ENCODE measurements at regions of chr2 and their contacts with region 1.

Region 1: GRCh38 chr2:163345908-163346573 is 389.8 kb downstream of the FIGN start:
- DNase-seq: no peak

Region 2: GRCh38 chr2:163119966-163120365 is 226.1 kb before region 1 on chr2:
- intact Hi-C with region 1: no loop called
- DNase-seq: no peak

Region 3: GRCh38 chr2:163142628-163143027 is 203.4 kb before region 1 on chr2:
- intact Hi-C with region 1: no loop called
- DNase-seq: no peak

Region 4: DNA sequence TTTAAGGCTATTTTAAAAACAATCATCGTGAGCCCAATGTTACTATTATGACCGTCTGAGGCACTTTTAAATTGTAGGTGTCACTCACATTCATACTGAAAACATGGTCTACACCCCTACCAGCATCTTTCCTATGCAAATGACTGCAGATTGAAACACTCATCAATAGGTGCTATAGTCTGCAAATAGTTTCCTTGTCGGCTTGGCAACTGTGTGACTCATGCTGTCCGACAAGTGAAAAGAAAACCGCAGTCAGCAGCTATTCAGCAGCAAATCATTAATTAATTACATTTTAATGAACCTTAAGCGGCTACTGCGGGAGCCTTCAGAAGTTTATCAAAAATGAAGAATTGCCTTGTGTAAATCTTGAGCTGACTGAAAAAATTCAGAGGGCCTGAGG is 255.3 kb after region 1 on chr2:
- intact Hi-C with region 1: loop called (anchors 10 kb)
- DNase-seq: no peak

Region 5: GRCh38 chr2:163735685-163736432 is 389.8 kb after region 1 on chr2 and contains the start of gene FIGN:
- intact Hi-C with region 1: loop called (anchors 2 kb)
- DNase-seq: peak; percentile 86
- total RNA-seq, gene FIGN: 16.4 TPM

Region 6: GRCh38 chr2:164061129-164061746 is 715.2 kb after region 1 on chr2:
- intact Hi-C with region 1: loop called (anchors 2 kb)
- DNase-seq: no peak

Measured in cardiac septum (tissue), 1 donor.